HepG2 (cell line): ENCODE measurements at regions of chr2 and their contacts with region 1.

Region 1: DNA sequence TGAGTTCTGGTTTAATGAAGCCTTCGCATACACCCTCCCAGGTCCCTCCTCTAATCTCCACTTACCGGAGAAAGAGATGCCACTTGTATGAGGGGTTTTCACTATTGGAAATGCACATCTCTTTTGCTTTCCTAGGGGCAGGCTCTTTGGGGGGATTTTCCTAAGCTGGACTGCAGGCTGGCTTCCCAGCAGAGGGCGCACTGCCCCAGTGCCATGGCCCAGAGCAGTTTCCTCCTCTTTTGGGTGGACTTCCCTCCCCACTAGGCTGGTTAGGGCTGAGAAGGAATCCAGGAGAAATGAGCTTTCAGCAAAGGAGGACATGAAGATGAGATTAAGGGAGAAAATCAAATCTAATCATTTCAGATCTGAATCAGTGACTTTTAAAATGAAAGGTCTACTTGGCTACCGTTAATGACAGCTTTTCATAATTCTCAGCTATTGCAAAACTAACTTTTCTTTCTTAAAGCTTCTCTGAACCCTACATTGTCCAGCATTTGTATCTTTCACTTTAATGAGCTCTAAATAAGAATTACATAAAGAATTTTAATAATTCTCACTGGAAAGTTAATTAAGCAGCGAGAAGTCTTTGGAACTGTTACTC is 784.1 kb upstream of the FANCL start:
- DNase-seq: peak; percentile 13
- ATAC-seq: peak; percentile 96
- H3K4me3 ChIP-seq: no peak overlapping the region
- H3K27ac ChIP-seq: no peak overlapping the region
- H3K4me1 ChIP-seq: no peaks in the 10 kb centered on the region
- H3K27me3 ChIP-seq: no peaks in the 10 kb centered on the region
- CTCF ChIP-seq: peak; percentile 84
- EP300 ChIP-seq: no peak
- POLR2A ChIP-seq: no peak
- RAD21 ChIP-seq: peak; percentile 60; the same call in 1 of the 2 replicates

Region 2: DNA sequence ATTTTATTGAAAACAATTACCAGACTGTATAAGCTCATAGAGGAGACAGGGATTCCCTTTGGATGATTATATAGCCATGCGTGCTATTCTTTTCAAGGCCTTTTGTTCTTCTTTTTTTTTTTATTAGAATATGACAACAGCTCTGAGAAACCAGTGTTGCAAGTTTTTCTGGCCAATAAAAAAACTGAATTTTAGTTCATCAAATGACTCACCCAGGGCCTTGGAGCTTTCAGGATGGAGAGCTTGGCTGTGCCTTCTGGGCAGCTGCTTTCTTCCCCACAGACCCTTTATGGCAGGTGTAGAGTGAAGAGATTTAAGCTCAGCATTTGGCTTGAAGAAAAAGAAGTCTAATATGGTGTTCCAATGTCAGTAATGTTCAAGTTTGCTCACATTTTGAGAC is 286.2 kb before region 1 on chr2:
- CTCF ChIA-PET with region 1: no interaction called
- POLR2A ChIA-PET with region 1: no interaction called
- in situ Hi-C with region 1: no loop called
- intact Hi-C with region 1: no loop called
- DNase-seq: no peak
- ATAC-seq: no peak
- H3K4me3 ChIP-seq: no peak overlapping the region
- H3K27ac ChIP-seq: no peak overlapping the region
- H3K4me1 ChIP-seq: no peaks in the 10 kb centered on the region
- H3K27me3 ChIP-seq: no peaks in the 10 kb centered on the region
- CTCF ChIP-seq: no peak
- EP300 ChIP-seq: no peak
- POLR2A ChIP-seq: no peak
- RAD21 ChIP-seq: no peak

Region 3: DNA sequence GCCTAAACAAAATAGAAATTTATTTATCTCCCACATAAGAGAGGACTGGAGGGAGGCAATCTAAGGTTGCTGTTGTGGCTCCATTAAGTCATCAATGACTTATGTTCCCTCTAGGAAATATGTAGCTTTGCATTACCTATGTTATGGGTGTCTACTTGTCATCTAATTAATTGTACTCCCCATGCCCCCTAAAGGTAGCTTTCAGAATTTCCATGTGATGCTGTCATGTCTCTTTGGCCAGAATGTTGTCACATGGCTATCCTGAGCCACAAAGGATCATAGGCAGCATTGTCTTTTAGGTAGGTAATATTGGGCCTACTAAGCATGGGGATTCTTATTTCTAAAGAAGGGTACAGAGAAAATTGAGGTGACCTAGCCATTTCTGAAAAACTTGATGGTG is 151.5 kb after region 1 on chr2:
- CTCF ChIA-PET with region 1: interaction called, 7 read pairs
- POLR2A ChIA-PET with region 1: no interaction called
- in situ Hi-C with region 1: no loop called
- intact Hi-C with region 1: loop called (anchors 1 kb)
- DNase-seq: no peak
- ATAC-seq: 0 out of 3 replicates have a peak, but pooled peaks have one; percentile 36
- H3K4me3 ChIP-seq: no peak overlapping the region
- H3K27ac ChIP-seq: no peak overlapping the region
- H3K4me1 ChIP-seq: no peaks in the 10 kb centered on the region
- H3K27me3 ChIP-seq: no peaks in the 10 kb centered on the region
- CTCF ChIP-seq: no peak
- EP300 ChIP-seq: no peak
- POLR2A ChIP-seq: no peak
- RAD21 ChIP-seq: no peak

Region 4: DNA sequence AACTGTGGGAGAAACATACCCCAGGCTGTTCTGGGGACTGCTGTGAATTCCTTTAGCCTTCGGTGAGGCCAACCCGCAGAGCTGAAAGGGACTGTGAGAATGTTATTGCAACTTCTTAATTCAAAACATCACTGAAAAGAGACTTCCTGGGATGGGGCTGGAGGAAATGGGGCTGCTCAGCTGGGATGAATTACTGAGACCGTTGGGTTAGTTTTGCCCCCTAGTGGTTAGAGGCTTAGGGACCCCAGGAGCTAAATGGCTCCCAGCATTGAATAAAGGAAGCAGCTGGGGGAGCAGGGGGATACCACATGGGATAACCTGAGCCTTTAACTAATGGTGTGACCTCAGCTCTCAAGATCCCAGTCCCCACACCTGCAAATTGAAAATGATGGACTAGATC is 157.0 kb after region 1 on chr2:
- CTCF ChIA-PET with region 1: interaction called, 7 read pairs
- POLR2A ChIA-PET with region 1: no interaction called
- in situ Hi-C with region 1: no loop called
- intact Hi-C with region 1: loop called (anchors 1 kb)
- DNase-seq: peak; percentile 22
- ATAC-seq: peak; percentile 96
- H3K4me3 ChIP-seq: no peak overlapping the region
- H3K27ac ChIP-seq: no peak overlapping the region
- H3K4me1 ChIP-seq: no peaks in the 10 kb centered on the region
- H3K27me3 ChIP-seq: no peaks in the 10 kb centered on the region
- CTCF ChIP-seq: peak; percentile 66
- EP300 ChIP-seq: no peak
- POLR2A ChIP-seq: no peak
- RAD21 ChIP-seq: no peak

Region 5: DNA sequence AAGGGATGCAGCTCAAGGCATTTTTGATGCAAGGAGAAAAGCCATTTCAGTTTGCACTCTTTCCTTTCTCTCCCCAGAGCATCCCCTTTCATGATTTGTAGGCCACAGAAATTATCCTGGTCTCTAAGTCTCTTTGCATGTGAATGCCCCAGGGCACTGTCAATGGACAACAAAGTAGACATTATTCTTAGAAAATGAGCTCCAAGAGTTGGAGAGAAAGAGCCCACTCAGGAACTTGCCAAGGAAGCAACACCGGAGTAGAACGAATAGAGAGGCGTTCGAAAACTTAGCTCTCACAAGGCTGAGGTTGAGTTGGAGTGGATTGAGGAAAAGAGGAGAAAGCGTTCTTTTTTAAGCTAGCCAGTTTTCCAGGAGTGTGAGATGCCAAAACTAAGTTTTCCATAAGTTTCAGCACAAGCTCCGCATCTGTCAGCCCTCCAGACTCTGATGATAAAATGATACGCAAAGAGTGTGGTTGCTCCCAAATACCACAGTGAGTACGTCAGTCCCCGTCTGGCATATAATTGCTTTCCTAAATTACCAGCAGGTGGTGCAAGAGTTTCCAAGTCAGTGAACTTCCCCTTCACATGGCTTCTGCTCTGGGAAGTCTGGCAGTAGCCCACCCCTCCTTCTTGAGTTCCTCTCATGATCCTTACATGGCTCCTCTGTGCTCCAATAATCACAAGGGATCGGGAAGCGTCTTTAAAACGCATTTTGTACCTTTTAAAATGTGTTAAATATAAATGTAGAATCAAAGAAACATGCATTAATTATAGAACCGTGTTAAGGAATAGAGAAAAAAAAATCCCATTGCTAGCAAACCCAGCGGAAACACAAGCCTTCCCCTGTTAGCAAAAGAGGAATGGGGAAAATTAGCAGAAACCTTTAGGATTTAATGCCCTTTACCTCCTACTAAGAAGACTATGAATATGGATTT is 276.5 kb after region 1 on chr2:
- CTCF ChIA-PET with region 1: no interaction called
- POLR2A ChIA-PET with region 1: no interaction called
- in situ Hi-C with region 1: no loop called
- intact Hi-C with region 1: loop called (anchors 10 kb)
- DNase-seq: peak; percentile 67
- ATAC-seq: peak; percentile 97
- H3K4me3 ChIP-seq: no peak overlapping the region
- H3K27ac ChIP-seq: no peak overlapping the region
- H3K4me1 ChIP-seq: no peaks in the 10 kb centered on the region
- H3K27me3 ChIP-seq: no peaks in the 10 kb centered on the region
- CTCF ChIP-seq: peak; percentile 75
- EP300 ChIP-seq: no peak
- POLR2A ChIP-seq: no peak
- RAD21 ChIP-seq: peak; percentile 32; the same call in 1 of the 2 replicates

Region 6: GRCh38 chr2:59584958-59585357 is 559.7 kb after region 1 on chr2:
- CTCF ChIA-PET with region 1: no interaction called
- POLR2A ChIA-PET with region 1: no interaction called
- in situ Hi-C with region 1: no loop called
- intact Hi-C with region 1: loop called (anchors 10 kb)
- DNase-seq: peak; percentile 6
- ATAC-seq: peak; percentile 75
- H3K4me3 ChIP-seq: no peak overlapping the region
- H3K27ac ChIP-seq: no peak overlapping the region
- H3K4me1 ChIP-seq: no peaks in the 10 kb centered on the region
- H3K27me3 ChIP-seq: no peaks in the 10 kb centered on the region
- CTCF ChIP-seq: peak; percentile 36
- EP300 ChIP-seq: no peak
- POLR2A ChIP-seq: no peak
- RAD21 ChIP-seq: no peak

Region 7: DNA sequence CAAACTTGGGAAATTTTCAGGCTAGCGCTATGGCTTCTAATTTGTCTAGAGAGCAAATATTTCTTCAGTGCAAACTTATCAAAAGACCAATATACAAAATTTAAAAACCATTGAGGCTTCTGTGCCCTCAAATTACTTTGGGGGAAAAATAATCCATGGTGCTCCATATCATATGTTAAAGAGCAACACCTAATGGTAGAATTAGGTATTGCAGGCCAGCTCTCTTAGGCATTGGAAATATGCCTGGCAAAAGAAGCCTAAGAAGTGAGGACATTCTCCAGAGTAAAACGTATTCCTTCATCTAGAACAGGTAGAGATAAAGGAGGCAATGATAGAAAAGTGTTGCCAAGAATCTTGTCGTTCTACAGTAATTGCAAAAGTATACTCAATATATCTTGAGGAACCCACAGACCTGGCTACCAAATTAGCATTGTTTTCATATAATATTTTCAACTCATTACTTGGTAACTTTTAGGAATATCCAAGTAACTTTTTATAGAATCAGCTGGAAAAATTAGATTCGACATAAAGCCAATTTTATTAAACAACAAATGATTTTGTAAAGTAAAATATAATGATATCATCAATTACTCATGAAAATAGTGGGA is 1127.1 kb after region 1 on chr2:
- CTCF ChIA-PET with region 1: no interaction called
- POLR2A ChIA-PET with region 1: no interaction called
- in situ Hi-C with region 1: no loop called
- intact Hi-C with region 1: loop called (anchors 5 kb)
- DNase-seq: peak; percentile 26
- ATAC-seq: no peak
- H3K4me3 ChIP-seq: no peak overlapping the region
- H3K27ac ChIP-seq: no peak overlapping the region
- H3K4me1 ChIP-seq: no peaks in the 10 kb centered on the region
- H3K27me3 ChIP-seq: peaks cover 0 to 16% of the 10 kb centered on the region in 2 experiments; a peak in 2 of 5 replicates
- CTCF ChIP-seq: peak; percentile 76
- EP300 ChIP-seq: no peak
- POLR2A ChIP-seq: no peak
- RAD21 ChIP-seq: peak; percentile 49